CD8-positive, alpha-beta T cell (primary cell): ENCODE measurements at regions of chr16 and their contacts with region 1.

Region 1: DNA sequence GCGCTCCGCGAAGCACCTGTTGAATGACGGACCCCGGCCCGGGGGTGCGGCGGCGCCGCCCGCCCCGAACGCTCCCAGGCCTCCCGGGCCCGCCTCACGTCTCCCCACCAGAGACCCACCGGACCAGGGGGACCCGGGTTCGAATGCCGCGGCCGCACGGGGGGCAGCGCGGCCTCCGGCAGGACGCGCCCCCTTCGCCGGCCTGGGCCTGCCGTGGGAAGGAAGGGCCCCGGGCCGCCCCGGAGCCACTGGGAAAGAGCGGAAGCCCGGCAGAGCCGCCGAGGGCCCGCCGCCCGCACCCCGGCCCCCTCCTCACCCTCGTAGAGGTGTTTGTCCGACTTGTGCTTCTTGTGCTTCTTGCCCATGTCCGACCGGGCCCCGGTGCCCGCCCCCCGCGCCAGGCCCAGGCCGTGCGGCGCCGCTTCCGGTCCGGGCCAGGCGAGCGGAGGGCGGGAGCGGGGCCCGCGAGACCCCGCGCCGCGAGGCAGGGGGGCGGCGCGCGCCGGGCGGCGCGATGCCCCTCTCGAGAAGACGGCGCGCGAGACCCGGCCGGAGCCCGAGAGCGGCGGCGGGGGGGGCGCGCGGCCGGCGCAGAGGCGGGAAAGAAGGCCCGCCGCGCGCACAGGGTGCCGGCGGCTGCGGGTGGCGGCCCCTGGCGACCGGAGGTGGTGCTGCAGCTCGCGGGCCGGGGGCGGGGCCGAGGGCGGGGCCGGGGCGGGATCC is at the start of gene BRD7:
- DNase-seq: peak; percentile 60 to 88 (median 71)
- ATAC-seq: peak; percentile 94
- H3K4me3 ChIP-seq: peak within 1 kb of the TSS; percentile 54 to 60
- H3K4me3 Mint-ChIP-seq: peak within 1 kb of the TSS; percentile 85
- H3K27ac ChIP-seq: peak within 1 kb of the TSS; percentile 56 to 79
- H3K27ac Mint-ChIP-seq: peak within 1 kb of the TSS; percentile 95
- H3K4me1 ChIP-seq: peaks cover 41% of the 10 kb centered on the region
- H3K4me1 Mint-ChIP-seq: peaks cover 52% of the 10 kb centered on the region
- H3K27me3 ChIP-seq: no peaks in the 10 kb centered on the region
- H3K27me3 Mint-ChIP-seq: no peaks in the 10 kb centered on the region
- CTCF ChIP-seq: no peak
- total RNA-seq, gene BRD7: 113 to 117 TPM

Region 2: DNA sequence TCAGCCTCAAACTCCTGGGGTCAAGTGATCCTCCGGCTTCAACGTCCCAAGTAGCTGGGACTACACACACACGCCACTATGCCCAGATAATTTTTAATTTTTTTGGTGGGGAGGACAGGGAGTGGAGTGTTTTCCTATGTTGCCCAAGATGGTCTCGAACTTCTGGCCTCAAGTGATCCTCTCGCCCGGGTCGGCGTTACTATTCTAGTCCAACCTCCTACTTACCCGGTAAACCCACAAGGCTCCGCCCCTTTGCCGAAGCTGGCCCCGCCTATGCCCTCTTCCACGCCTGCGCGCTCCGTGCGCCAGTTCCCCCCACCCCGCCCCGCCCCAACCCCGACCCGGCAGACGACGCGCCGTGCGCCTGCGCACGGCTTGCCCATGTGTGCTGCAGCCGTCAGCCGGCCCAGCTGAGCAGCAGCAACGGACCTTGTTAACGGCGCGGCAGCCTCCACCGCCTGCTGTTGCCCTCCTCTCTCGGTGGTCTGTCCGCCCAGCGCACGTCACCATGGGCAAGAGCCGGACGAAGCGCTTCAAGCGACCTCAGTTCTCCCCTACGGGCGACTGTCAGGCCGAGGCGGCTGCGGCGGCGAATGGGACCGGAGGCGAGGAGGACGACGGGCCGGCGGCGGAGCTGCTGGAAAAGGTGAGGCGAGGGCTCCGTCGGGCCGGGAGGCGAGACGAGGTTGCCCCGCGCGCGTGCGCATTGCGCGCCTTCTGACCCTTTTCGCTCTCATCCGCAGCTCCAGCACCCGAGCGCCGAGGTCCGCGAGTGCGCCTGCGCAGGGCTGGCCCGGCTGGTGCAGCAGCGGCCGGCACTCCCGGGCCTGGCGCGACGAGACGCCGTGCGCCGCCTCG is 302.7 kb before region 1 on chr16 and contains the start of gene HEATR3:
- CTCF ChIA-PET with region 1: no interaction called
- POLR2A ChIA-PET with region 1: interaction called, 3 read pairs
- intact Hi-C with region 1: loop called (anchors 2 to 5 kb)
- DNase-seq: peak; percentile 88 to 97 (median 93)
- ATAC-seq: peak; percentile 86
- H3K4me3 ChIP-seq: peak within 1 kb of the TSS; percentile 78 to 92
- H3K4me3 Mint-ChIP-seq: peak within 1 kb of the TSS; percentile 93
- H3K27ac ChIP-seq: peak within 1 kb of the TSS; percentile 73 to 79
- H3K27ac Mint-ChIP-seq: peak within 1 kb of the TSS; percentile 92
- H3K4me1 ChIP-seq: peaks cover 17% of the 10 kb centered on the region
- H3K4me1 Mint-ChIP-seq: peaks cover 42% of the 10 kb centered on the region
- H3K27me3 ChIP-seq: no peaks in the 10 kb centered on the region
- H3K27me3 Mint-ChIP-seq: no peaks in the 10 kb centered on the region
- CTCF ChIP-seq: no peak
- total RNA-seq, gene HEATR3: 9.3 to 11.4 TPM